ENCODE measurements at regions of chr7 and their contacts with region 1.

Region 1: GRCh38 chr7:96640054-96640453 is 69.6 kb downstream of the SEM1 start:
- DNase-seq: peak; percentile 3
- ATAC-seq: peak; percentile 87
- H3K4me3 ChIP-seq: no peak overlapping the region
- H3K27ac ChIP-seq: no peak overlapping the region
- H3K4me1 ChIP-seq: no peaks in the 10 kb centered on the region
- H3K27me3 ChIP-seq: no peaks in the 10 kb centered on the region
- CTCF ChIP-seq: no peak

Region 2: GRCh38 chr7:96596120-96596826 is 43.8 kb before region 1 on chr7:
- CTCF ChIA-PET with region 1: no interaction called
- POLR2A ChIA-PET with region 1: no interaction called
- intact Hi-C with region 1: no loop called
- DNase-seq: peak; percentile 32
- ATAC-seq: peak; percentile 66
- H3K4me3 ChIP-seq: no peak overlapping the region
- H3K27ac ChIP-seq: no peak overlapping the region
- H3K4me1 ChIP-seq: no peaks in the 10 kb centered on the region
- H3K27me3 ChIP-seq: no peaks in the 10 kb centered on the region
- CTCF ChIP-seq: peak; percentile 47

Region 3: DNA sequence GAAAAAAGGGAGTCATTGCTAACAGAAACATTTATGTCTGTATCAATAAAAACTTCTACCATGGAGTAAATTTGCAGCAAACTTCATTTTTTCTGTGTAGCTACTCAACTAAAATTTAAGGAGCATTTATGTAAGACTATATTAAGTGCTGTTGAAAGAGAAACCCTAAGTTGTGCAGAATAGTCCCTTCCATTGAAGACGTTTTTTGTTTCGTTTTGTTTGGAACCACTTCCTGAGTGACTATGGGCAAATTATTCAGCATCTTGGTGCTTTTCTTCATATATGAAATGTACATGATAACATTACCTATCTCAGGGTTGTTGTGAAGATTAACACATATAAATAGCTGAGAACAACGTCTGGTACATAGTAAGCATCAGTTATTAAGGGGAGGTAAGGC is 45.3 kb after region 1 on chr7:
- CTCF ChIA-PET with region 1: no interaction called
- POLR2A ChIA-PET with region 1: no interaction called
- intact Hi-C with region 1: loop called (anchors 5 kb)
- DNase-seq: no peak
- ATAC-seq: no peak
- H3K4me3 ChIP-seq: no peak overlapping the region
- H3K27ac ChIP-seq: no peak overlapping the region
- H3K4me1 ChIP-seq: peaks cover 14% of the 10 kb centered on the region
- H3K27me3 ChIP-seq: no peaks in the 10 kb centered on the region
- CTCF ChIP-seq: no peak

Measured in PC-3 (cell line).